ENCODE measurements at regions of chr1 and their contacts with region 1.

Region 1: GRCh38 chr1:37474046-37474759 is at the start of gene ZC3H12A:
- DNase-seq: no peak
- H3K4me3 ChIP-seq: peak within 1 kb of the TSS; percentile 75
- H3K27me3 ChIP-seq: no peaks in the 10 kb centered on the region
- CTCF ChIP-seq: no peak
- polyA plus RNA-seq, gene ZC3H12A: 4.8 and 8.9 TPM in 2 replicates

Region 2: GRCh38 chr1:37458528-37458927 is 15.7 kb before region 1 on chr1:
- CTCF ChIA-PET with region 1: interaction called, 41 read pairs
- POLR2A ChIA-PET with region 1: no interaction called
- DNase-seq: no peak
- H3K4me3 ChIP-seq: no peak overlapping the region
- H3K27me3 ChIP-seq: no peaks in the 10 kb centered on the region
- CTCF ChIP-seq: no peak